Left cardiac atrium (tissue), 4 donors: ENCODE measurements at regions of chr1 and their contacts with region 1.

Region 1: DNA sequence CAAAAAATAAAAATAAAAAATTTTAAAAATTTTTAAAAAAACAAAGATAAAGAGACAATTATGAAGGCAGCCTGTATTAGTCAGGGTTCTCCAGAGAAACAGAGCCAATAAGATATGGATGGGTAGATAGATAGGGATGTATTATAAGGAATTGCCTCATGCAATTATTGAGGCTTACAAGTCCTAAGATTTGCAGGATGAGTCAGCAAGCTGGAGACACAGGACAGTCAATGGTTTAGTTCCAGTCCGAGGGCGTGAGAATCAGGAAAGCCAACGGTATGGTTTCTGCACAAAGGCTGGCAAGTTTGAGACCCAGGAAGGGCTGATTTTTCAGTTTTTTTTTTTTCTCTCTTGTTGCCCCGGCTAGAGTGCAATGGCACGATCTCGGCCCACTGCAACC is 24.1 kb upstream of the EIF4G3 start:
- DNase-seq: no peak
- ATAC-seq: no peak

Region 2: DNA sequence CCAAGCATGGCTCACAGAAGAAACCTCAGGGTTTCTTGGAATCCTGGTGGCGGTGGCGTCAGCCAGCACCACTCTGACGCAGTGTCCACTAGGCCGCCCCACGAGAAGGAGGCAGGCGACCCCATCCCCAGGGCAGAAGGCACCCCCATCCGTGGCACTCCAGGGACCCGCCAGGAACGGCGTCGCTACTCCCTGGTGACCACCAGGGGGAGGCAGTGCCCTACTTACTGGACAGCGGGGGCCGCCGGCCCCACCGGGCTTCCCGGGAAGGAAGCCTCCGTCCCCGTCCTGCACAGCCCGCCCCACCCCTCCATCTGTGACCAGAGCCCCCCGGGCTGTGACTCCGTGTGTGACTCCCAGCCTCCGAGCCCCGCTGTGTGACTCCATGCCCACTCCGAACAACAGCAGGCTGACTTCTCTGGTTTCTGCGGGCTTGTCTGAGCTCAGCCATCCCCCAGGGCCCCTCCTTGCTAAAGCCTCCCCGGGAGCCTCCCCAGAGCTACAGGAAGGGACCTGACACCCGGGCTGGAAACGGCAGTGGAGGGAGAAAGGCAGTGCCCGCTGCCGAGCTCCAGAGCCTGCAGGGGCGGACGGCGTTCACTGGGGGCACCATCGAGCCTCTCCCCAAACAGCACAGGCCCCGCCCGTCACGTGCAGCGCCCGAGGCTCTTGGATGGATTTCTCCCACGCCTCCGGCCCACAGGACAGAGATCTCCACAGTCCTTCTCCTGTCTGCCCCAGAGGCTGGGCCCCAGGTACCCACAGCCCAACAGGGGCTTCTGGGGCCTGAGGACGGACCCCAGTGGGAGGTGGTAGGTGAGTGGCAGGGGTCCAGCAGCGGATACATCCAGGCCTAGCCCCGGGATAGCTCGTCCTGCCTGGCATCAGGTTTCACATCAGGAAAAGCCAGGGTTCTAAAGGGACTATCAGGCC is 504.1 kb before region 1 on chr1:
- intact Hi-C with region 1: loop called (anchors 1 to 5 kb)
- DNase-seq: peak; percentile 89
- ATAC-seq: peak; percentile 95 to 96